Colonic mucosa (tissue), 4 donors: ENCODE measurements at regions of chr3 and their contacts with region 1.

Region 1: GRCh38 chr3:53195602-53196574 is 34.9 kb downstream of the PRKCD start:
- DNase-seq: peak; percentile 44
- H3K4me3 ChIP-seq: no peak overlapping the region
- H3K27ac ChIP-seq: no peak overlapping the region
- H3K4me1 ChIP-seq: no peaks in the 10 kb centered on the region
- H3K27me3 ChIP-seq: no peaks in the 10 kb centered on the region
- CTCF ChIP-seq: peak; percentile 100

Region 2: GRCh38 chr3:53114011-53114400 is 81.9 kb before region 1 on chr3:
- intact Hi-C with region 1: loop called (anchors 2 kb)
- DNase-seq: peak; percentile 89
- H3K4me3 ChIP-seq: no peak overlapping the region
- H3K27ac ChIP-seq: no peak overlapping the region
- H3K4me1 ChIP-seq: no peaks in the 10 kb centered on the region
- H3K27me3 ChIP-seq: no peaks in the 10 kb centered on the region
- CTCF ChIP-seq: peak; percentile 89

Region 3: GRCh38 chr3:53134631-53135232 is 61.2 kb before region 1 on chr3:
- intact Hi-C with region 1: loop called (anchors 1 kb)
- DNase-seq: peak; percentile 88
- H3K4me3 ChIP-seq: no peak overlapping the region
- H3K27ac ChIP-seq: no peak overlapping the region
- H3K4me1 ChIP-seq: no peaks in the 10 kb centered on the region
- H3K27me3 ChIP-seq: no peaks in the 10 kb centered on the region
- CTCF ChIP-seq: peak; percentile 84